ENCODE measurements at regions of chr14 and their contacts with region 1.

Region 1: DNA sequence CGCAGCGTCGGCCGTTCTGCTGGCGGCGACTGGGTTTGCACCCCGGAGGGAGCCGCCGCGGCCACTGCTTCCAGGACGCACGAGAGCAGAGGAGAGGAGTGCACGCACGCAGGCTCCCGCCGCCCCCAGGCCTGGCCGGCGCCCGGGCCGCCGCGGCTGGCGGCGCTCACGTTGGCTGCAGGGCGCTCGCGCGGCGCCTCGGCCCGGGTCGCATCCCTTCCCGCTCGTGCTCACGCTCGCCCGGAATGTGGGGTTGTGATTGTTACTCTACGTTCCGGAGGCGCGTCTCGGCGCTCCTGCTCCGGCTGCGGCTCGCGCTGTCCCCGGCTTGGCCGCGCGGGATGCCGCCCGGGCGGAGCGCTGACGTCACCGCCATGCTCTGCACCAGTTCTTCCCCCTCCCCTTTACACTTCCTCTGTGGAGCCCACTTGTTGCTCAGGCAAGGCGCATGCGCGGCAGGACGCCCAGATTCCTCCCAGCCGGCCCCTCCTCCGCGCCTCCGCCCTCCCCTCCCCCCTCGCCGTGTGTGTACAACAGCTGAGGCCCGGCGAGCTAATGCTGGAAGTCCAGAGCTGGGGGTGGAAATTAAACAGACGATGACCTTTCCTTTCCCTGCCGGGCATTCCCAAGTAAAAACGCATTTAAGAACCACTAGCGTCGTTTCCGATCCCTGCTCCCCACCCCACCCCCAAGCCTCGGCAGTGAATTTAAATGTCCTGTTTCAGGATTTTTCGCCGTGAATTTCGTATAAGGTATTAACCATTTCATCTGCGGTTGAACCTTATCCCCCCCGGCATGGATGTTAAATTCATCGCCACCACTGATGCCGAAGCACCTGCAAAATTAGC is at the start of gene IRF2BPL:
- DNase-seq: peak; percentile 87
- ATAC-seq: peak; percentile 61
- H3K4me3 ChIP-seq: peak within 1 kb of the TSS; percentile 81
- H3K27ac ChIP-seq: peak within 1 kb of the TSS; percentile 98
- H3K4me1 ChIP-seq: peaks cover 38% of the 10 kb centered on the region
- H3K27me3 ChIP-seq: no peaks in the 10 kb centered on the region
- CTCF ChIP-seq: no peak
- EP300 ChIP-seq: peak in 1 of 2 experiments; percentile 29; a peak in 2 of 4 replicates
- POLR2A ChIP-seq: peak; percentile 83
- RAD21 ChIP-seq: no peak
- polyA plus RNA-seq, gene IRF2BPL: 1.2 to 1.9 TPM

Region 2: GRCh38 chr14:76664790-76665189 is 363.8 kb before region 1 on chr14:
- CTCF ChIA-PET with region 1: no interaction called
- POLR2A ChIA-PET with region 1: no interaction called
- RAD21 ChIA-PET with region 1: no interaction called
- SMC1A ChIA-PET with region 1: no interaction called
- in situ Hi-C with region 1: no loop called
- intact Hi-C with region 1: no loop called
- DNase-seq: no peak
- ATAC-seq: no peak
- H3K4me3 ChIP-seq: no peak overlapping the region
- H3K27ac ChIP-seq: no peak overlapping the region
- H3K4me1 ChIP-seq: no peaks in the 10 kb centered on the region
- H3K27me3 ChIP-seq: no peaks in the 10 kb centered on the region
- CTCF ChIP-seq: no peak
- EP300 ChIP-seq: no peak
- POLR2A ChIP-seq: no peak
- RAD21 ChIP-seq: no peak

Region 3: DNA sequence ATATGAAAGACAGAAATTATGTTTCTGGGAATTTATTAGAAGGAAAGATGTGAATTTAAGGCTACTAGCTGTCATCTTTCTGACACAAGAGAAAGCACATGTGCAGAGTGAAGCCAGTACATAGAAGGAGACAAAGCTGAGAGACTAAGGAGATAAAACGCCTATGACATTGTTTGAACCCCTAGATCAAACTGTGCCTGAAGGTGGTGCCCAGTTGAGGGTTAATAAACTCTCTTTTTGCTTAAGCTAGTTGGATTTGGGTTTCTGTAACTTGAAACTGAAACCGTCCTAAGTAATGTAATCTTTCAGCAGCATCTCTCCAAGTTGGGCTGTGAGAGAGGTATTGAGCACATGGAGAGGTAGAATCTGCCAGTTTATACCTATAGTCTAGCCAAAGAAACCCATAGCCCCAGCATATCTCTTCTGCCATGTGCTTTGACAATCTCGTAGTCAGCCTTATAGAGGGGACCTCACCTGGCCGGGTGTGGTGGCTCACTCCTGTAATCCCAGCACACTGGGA is 118.2 kb before region 1 on chr14:
- CTCF ChIA-PET with region 1: interaction called, 25 read pairs
- POLR2A ChIA-PET with region 1: interaction called, 5 read pairs
- RAD21 ChIA-PET with region 1: interaction called, 23 read pairs
- SMC1A ChIA-PET with region 1: interaction called, 17 read pairs
- in situ Hi-C with region 1: no loop called
- intact Hi-C with region 1: no loop called
- DNase-seq: no peak
- ATAC-seq: no peak
- H3K4me3 ChIP-seq: no peak overlapping the region
- H3K27ac ChIP-seq: no peak overlapping the region
- H3K4me1 ChIP-seq: peaks cover 9% of the 10 kb centered on the region
- H3K27me3 ChIP-seq: no peaks in the 10 kb centered on the region
- CTCF ChIP-seq: no peak
- EP300 ChIP-seq: no peak
- POLR2A ChIP-seq: no peak
- RAD21 ChIP-seq: no peak

Region 4: DNA sequence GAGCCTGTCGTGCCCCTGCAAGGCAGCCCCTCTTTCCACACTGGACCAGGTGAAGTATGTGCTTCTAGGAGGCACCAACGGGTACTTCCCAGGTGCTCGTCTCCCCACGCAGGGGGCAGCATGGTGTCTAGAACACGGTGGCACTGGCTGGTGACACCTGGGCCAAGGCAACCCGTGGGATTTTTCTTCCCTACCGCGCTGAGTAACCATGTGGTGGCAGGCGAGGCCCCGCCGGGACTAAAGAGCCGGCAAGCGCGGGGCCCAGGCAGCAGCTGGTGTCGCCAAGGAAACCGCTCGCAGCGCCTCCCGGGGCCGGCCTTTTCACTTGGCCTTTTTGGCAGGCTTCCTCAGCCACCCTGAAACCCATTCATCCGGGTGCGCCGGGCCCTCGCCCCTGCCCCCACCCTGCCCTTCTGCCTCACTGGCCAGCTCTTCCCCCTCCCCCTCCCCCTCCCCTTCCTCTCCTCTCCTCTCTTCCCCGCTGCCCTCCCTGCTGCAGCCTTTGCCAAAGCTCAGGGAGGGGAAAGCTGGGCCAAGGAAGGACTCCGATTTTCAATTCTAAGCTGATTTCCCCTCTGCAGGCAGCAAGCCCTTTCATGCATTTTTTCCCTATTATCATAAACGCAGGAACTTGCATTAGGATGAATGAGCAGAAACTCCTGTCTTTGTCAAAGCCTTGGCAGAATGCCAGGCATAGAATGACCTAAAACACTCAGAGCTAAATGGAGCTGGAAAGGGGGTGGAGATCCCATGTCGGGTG is 81.3 kb before region 1 on chr14:
- CTCF ChIA-PET with region 1: interaction called, 14 read pairs
- POLR2A ChIA-PET with region 1: interaction called, 12 read pairs
- RAD21 ChIA-PET with region 1: interaction called, 20 read pairs
- SMC1A ChIA-PET with region 1: interaction called, 9 read pairs
- in situ Hi-C with region 1: no loop called
- intact Hi-C with region 1: no loop called
- DNase-seq: peak; percentile 67
- ATAC-seq: peak; percentile 87
- H3K4me3 ChIP-seq: no peak overlapping the region
- H3K27ac ChIP-seq: peak overlapping the region; percentile 64
- H3K4me1 ChIP-seq: peaks cover 29% of the 10 kb centered on the region
- H3K27me3 ChIP-seq: no peaks in the 10 kb centered on the region
- CTCF ChIP-seq: peak; percentile 45 to 72 (median 58)
- EP300 ChIP-seq: peak in 1 of 2 experiments; percentile 65; a peak in 2 of 4 replicates
- POLR2A ChIP-seq: no peak
- RAD21 ChIP-seq: peak; percentile 72

Region 5: GRCh38 chr14:76977793-76978720 is 50.6 kb before region 1 on chr14:
- CTCF ChIA-PET with region 1: interaction called, 3 read pairs
- POLR2A ChIA-PET with region 1: interaction called, 27 read pairs
- RAD21 ChIA-PET with region 1: interaction called, 34 read pairs
- SMC1A ChIA-PET with region 1: interaction called, 17 read pairs
- in situ Hi-C with region 1: no loop called
- intact Hi-C with region 1: no loop called
- DNase-seq: peak; percentile 81
- ATAC-seq: peak; percentile 98
- H3K4me3 ChIP-seq: no peak overlapping the region
- H3K27ac ChIP-seq: peak overlapping the region; percentile 65
- H3K4me1 ChIP-seq: peaks cover 20% of the 10 kb centered on the region
- H3K27me3 ChIP-seq: no peaks in the 10 kb centered on the region
- CTCF ChIP-seq: no peak
- EP300 ChIP-seq: peak; percentile 64 to 75; a peak in 2 of 4 replicates
- POLR2A ChIP-seq: peak; percentile 72
- RAD21 ChIP-seq: 0 out of 2 replicates have a peak, but pooled peaks have one; percentile 20

Region 6: DNA sequence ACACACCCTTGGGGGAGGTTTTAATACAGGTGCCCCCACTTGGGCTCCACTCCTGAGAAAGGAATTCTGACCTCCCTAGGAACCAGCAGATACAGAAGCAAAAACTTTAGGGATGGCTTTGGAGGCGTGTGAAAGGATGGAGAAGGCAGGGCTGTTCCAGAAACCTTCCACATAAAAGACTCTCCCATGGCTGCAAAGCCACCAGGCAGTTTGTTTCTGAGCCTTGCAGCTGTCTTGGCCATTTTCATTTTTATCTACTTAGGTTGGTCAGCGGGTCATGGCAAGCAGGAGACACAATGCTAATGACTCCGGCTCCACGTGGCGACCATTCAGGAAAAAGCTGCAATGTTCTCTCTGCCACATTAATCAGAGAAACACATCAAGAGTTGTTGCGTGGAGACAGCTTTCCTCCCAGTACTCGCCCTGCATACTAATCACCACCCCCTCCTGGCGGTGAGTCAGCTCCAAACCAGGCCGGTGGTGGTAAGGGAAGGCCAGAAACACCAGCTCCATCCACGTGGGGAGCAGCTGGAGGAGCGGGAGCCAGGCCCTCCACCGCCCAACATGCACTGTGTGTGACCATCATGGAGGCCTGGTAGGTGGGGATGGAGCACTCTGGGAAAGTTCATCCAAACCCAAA is 30.8 kb after region 1 on chr14:
- CTCF ChIA-PET with region 1: interaction called, 16 read pairs
- POLR2A ChIA-PET with region 1: interaction called, 4 read pairs
- RAD21 ChIA-PET with region 1: interaction called, 11 read pairs
- SMC1A ChIA-PET with region 1: interaction called, 3 read pairs
- in situ Hi-C with region 1: no loop called
- intact Hi-C with region 1: no loop called
- DNase-seq: no peak
- ATAC-seq: peak; percentile 57
- H3K4me3 ChIP-seq: no peak overlapping the region
- H3K27ac ChIP-seq: no peak overlapping the region
- H3K4me1 ChIP-seq: no peaks in the 10 kb centered on the region
- H3K27me3 ChIP-seq: no peaks in the 10 kb centered on the region
- CTCF ChIP-seq: peak in 2 of 3 experiments; percentile 1 to 18; a peak in 1 of 6 replicates
- EP300 ChIP-seq: no peak
- POLR2A ChIP-seq: no peak
- RAD21 ChIP-seq: peak; percentile 27; the same call in 1 of the 2 replicates

Region 7: GRCh38 chr14:77457522-77458290 is 429.1 kb after region 1 on chr14 and contains the starts of genes AHSA1 and VIPAS39:
- CTCF ChIA-PET with region 1: no interaction called
- POLR2A ChIA-PET with region 1: no interaction called
- RAD21 ChIA-PET with region 1: no interaction called
- SMC1A ChIA-PET with region 1: no interaction called
- in situ Hi-C with region 1: no loop called
- intact Hi-C with region 1: no loop called
- DNase-seq: peak; percentile 99
- ATAC-seq: peak; percentile 95
- H3K4me3 ChIP-seq: peak within 1 kb of the TSS; percentile 88
- H3K27ac ChIP-seq: peak within 1 kb of the TSS; percentile 97
- H3K4me1 ChIP-seq: peaks cover 13% of the 10 kb centered on the region
- H3K27me3 ChIP-seq: no peaks in the 10 kb centered on the region
- CTCF ChIP-seq: no peak
- EP300 ChIP-seq: no peak
- POLR2A ChIP-seq: peak; percentile 93
- RAD21 ChIP-seq: no peak
- polyA plus RNA-seq, gene AHSA1: 51.8 to 98.3 TPM
- polyA plus RNA-seq, gene VIPAS39: 6.7 to 10.5 TPM